SK-N-SH (cell line): ENCODE measurements at regions of chr10 and their contacts with region 1.

Region 1: GRCh38 chr10:117496616-117497028 is 45.9 kb upstream of the EMX2 start:
- DNase-seq: peak; percentile 78
- H3K4me3 ChIP-seq: peak overlapping the region in 1 of 2 experiments; percentile 33; a peak in 1 of 4 replicates
- H3K27ac ChIP-seq: no peak overlapping the region
- H3K4me1 ChIP-seq: peaks cover 0 to 3% of the 10 kb centered on the region in 2 experiments; a peak in 1 of 4 replicates
- H3K27me3 ChIP-seq: no peaks in the 10 kb centered on the region
- CTCF ChIP-seq: peak; percentile 91
- EP300 ChIP-seq: no peak
- RAD21 ChIP-seq: peak; percentile 98

Region 2: DNA sequence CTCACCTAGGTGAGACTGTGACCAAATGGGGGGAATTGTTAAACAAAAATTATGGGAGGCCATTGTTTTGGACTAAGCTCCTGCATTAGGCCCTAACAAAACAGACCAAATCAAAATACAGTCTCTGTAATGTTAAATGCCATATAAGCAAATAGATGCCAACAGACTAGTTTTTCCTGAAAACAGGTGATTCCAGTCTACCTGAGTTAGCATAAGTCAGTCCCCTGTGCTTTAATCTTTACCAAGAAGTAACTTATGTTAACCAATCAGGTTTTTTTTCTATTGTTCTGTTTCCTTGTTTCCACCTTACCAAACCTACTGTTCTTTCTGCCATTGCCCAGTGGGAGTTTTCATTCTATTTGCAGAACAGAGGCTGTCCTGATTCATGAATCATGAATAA is 169.4 kb before region 1 on chr10:
- CTCF ChIA-PET with region 1: no interaction called
- POLR2A ChIA-PET with region 1: no interaction called
- DNase-seq: no peak
- H3K4me3 ChIP-seq: no peak overlapping the region
- H3K27ac ChIP-seq: no peak overlapping the region
- H3K4me1 ChIP-seq: no peaks in the 10 kb centered on the region; a peak in 1 of 4 replicates
- H3K27me3 ChIP-seq: no peaks in the 10 kb centered on the region
- CTCF ChIP-seq: no peak
- EP300 ChIP-seq: no peak
- RAD21 ChIP-seq: no peak

Region 3: DNA sequence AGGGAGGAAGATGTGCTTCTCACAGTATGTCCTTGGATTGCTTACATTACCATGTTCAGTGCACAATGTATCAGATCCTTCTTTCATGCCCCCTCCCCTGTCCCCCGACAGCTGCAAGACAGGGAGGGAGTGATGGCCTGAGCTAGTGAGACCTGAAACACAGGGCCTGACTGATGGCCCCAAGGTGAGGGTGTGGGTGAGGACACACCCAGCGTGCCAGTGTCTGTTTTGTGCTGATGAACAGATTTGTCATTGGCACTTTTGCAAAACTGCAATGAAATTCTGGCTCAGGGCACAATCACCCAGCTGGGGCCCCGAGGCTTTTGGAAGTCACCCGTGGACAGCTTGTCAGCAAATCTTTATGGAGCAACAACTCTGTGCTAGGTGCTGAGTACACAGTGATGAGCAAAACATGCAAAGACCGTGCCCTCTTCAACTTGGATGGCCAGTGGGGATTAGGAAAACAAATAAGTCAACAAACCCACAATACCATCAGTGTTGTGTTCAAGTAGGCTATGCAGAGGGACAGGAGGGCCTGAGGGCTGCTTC is 13.5 kb before region 1 on chr10:
- CTCF ChIA-PET with region 1: interaction called, 34 read pairs
- POLR2A ChIA-PET with region 1: no interaction called
- DNase-seq: no peak
- H3K4me3 ChIP-seq: no peak overlapping the region
- H3K27ac ChIP-seq: no peak overlapping the region
- H3K4me1 ChIP-seq: no peaks in the 10 kb centered on the region
- H3K27me3 ChIP-seq: no peaks in the 10 kb centered on the region
- CTCF ChIP-seq: no peak
- EP300 ChIP-seq: no peak
- RAD21 ChIP-seq: no peak

Region 4: GRCh38 chr10:117537436-117537903 is 40.8 kb after region 1 on chr10:
- CTCF ChIA-PET with region 1: interaction called, 189 read pairs
- POLR2A ChIA-PET with region 1: no interaction called
- DNase-seq: peak; percentile 93
- H3K4me3 ChIP-seq: peak overlapping the region in 1 of 2 experiments; percentile 37; a peak in 1 of 4 replicates
- H3K27ac ChIP-seq: no peak overlapping the region
- H3K4me1 ChIP-seq: peaks cover 0 to 21% of the 10 kb centered on the region in 2 experiments; a peak in 2 of 4 replicates
- H3K27me3 ChIP-seq: peaks cover 89% of the 10 kb centered on the region
- CTCF ChIP-seq: peak; percentile 65
- EP300 ChIP-seq: no peak
- RAD21 ChIP-seq: peak; percentile 72

Region 5: DNA sequence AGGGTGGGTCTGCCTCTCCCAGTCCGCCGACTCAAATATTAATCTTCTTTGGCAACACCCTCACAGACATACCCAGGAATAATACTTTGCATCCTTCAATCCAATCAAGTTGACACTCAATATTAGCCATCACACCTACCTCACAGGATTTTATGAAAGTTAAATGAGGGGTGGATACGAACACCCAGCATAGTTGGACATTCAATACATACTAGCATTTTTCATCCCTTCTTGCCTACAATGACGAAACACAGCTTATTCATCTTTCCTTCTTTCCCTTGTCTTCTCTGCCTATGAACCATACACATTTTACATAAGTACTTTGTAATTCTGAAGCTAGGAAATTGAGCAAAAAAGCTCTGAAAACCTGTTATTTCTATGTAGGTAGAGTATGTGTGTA is 94.4 kb after region 1 on chr10:
- CTCF ChIA-PET with region 1: no interaction called
- POLR2A ChIA-PET with region 1: no interaction called
- DNase-seq: no peak
- H3K4me3 ChIP-seq: no peak overlapping the region
- H3K27ac ChIP-seq: no peak overlapping the region
- H3K4me1 ChIP-seq: no peaks in the 10 kb centered on the region
- H3K27me3 ChIP-seq: no peaks in the 10 kb centered on the region
- CTCF ChIP-seq: no peak
- EP300 ChIP-seq: no peak
- RAD21 ChIP-seq: no peak

Region 6: GRCh38 chr10:118241229-118242137 is 744.9 kb after region 1 on chr10:
- CTCF ChIA-PET with region 1: interaction called, 87 read pairs
- POLR2A ChIA-PET with region 1: no interaction called
- DNase-seq: peak; percentile 53
- H3K4me3 ChIP-seq: no peak overlapping the region; a peak in 1 of 4 replicates
- H3K27ac ChIP-seq: no peak overlapping the region
- H3K4me1 ChIP-seq: peaks cover 0 to 13% of the 10 kb centered on the region in 2 experiments; a peak in 2 of 4 replicates
- H3K27me3 ChIP-seq: peaks cover 9% of the 10 kb centered on the region; the same call in 1 of the 2 replicates
- CTCF ChIP-seq: peak; percentile 93
- EP300 ChIP-seq: no peak
- RAD21 ChIP-seq: peak; percentile 98

Region 7: GRCh38 chr10:118259288-118259906 is 762.8 kb after region 1 on chr10:
- CTCF ChIA-PET with region 1: interaction called, 14 read pairs
- POLR2A ChIA-PET with region 1: no interaction called
- DNase-seq: peak; percentile 47
- H3K4me3 ChIP-seq: peak overlapping the region in 1 of 2 experiments; percentile 36; a peak in 1 of 4 replicates
- H3K27ac ChIP-seq: no peak overlapping the region
- H3K4me1 ChIP-seq: peaks cover 0 to 22% of the 10 kb centered on the region in 2 experiments; a peak in 2 of 4 replicates
- H3K27me3 ChIP-seq: no peaks in the 10 kb centered on the region; the same call in 1 of the 2 replicates
- CTCF ChIP-seq: peak; percentile 66
- EP300 ChIP-seq: no peak
- RAD21 ChIP-seq: peak; percentile 66

Region 8: GRCh38 chr10:118423800-118424479 is 927.3 kb after region 1 on chr10:
- CTCF ChIA-PET with region 1: interaction called, 16 read pairs
- POLR2A ChIA-PET with region 1: no interaction called
- DNase-seq: peak; percentile 64
- H3K4me3 ChIP-seq: peak overlapping the region in 1 of 2 experiments; percentile 52; a peak in 1 of 4 replicates
- H3K27ac ChIP-seq: no peak overlapping the region
- H3K4me1 ChIP-seq: no peaks in the 10 kb centered on the region; a peak in 1 of 4 replicates
- H3K27me3 ChIP-seq: no peaks in the 10 kb centered on the region; the same call in 1 of the 2 replicates
- CTCF ChIP-seq: peak; percentile 74
- EP300 ChIP-seq: no peak
- RAD21 ChIP-seq: peak; percentile 81

Region 9: GRCh38 chr10:118543714-118544400 is 1047.2 kb after region 1 on chr10:
- CTCF ChIA-PET with region 1: interaction called, 10 read pairs
- POLR2A ChIA-PET with region 1: no interaction called
- DNase-seq: peak; percentile 64
- H3K4me3 ChIP-seq: no peak overlapping the region
- H3K27ac ChIP-seq: no peak overlapping the region
- H3K4me1 ChIP-seq: no peaks in the 10 kb centered on the region; a peak in 1 of 4 replicates
- H3K27me3 ChIP-seq: no peaks in the 10 kb centered on the region; the same call in 1 of the 2 replicates
- CTCF ChIP-seq: peak; percentile 51
- EP300 ChIP-seq: no peak
- RAD21 ChIP-seq: peak; percentile 78